Ovary (tissue), 10 donors: ENCODE measurements at regions of chr9 and their contacts with region 1.

Region 1: DNA sequence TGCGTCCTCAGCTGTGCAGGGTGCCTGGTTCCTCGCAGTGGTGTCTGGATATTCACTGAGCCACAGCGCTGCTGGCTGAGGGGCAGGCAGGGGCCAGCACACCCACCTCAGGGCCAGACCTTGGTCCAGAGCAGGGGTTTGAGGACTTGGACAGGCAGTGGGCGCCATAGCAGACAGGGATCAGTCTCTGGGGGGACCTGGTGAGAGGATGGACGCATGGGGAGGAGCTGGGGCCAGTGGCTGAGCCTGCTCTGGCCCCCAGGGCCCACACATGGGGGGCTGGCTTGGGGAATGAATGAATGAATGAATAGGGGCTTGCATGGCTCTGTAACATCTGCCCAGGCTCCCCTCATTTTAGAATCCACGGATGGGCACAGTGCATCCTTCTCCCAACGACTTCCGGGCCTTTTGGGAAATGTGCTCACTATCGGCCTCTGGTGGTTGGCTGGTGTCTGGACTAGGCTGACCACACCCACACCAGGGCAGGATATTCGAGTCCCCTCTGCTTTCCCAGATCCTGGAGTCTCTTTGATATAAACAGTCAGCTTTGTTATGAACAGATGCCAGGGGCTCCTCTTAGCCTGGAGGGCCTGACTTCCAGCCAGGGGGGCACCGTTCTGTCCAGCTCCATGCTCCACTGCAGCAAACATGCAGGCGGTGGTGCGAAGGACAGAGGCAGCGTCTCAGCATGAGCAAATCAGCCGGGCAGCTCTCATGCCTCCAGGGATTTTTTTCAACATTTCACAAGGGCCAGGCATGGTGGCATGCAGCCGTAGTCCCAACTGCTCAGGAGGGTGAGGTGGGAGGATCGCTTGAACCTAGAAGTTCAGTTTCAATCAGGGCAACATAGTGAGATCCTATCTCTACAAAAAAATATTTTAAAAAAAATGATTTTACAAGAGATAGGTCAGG is 62.6 kb downstream of the NEK6 start:
- DNase-seq: peak; percentile 73 to 82 (median 78)
- H3K4me3 ChIP-seq: no peak overlapping the region
- H3K27ac ChIP-seq: no peak overlapping the region
- H3K4me1 ChIP-seq: peaks cover 3% of the 10 kb centered on the region
- H3K27me3 ChIP-seq: no peaks in the 10 kb centered on the region
- CTCF ChIP-seq: peak; percentile 70 to 78 (median 71)
- EP300 ChIP-seq: no peak
- POLR2A ChIP-seq: no peak

Region 2: DNA sequence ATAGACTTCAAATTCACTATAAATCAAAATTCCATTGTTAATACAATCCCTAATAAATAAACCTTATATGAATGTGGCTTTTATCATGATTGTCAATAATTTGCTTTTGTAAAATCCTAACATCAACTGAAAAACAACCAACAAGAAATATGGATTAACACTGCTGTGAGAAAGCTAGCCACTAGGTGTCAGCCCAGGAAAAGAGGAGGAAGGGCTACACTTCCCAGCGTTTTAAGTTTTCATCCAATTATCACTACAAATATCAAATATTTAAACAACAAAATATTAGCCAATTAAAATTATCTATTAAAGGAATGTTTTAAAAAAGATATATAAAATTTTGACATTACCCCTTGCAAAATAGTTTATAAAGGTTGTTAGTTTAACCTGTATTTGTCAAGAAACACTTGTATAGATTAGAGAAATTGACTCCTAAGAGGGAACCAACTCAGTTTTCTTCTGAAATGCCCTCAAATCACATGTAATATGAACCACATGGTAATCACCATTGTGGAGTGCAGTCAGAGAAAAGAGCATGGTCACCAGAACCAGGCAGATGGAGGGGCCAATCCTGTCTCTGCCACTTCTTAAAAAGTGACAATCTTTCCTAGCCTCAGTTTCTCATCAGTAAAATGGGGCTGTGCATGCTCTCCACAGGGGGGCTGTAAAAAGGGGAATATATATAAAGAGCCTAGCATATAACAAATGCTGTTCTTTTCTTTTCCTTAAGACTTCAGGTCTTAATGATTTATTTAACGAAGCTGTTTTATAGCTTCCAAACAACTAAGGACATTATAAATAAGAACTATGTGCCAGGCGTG is 776.1 kb before region 1 on chr9:
- intact Hi-C with region 1: loop called in 1 of 4 experiments (anchors 10 kb)
- DNase-seq: peak in 1 of 5 donors; percentile 31
- H3K4me3 ChIP-seq: no peak overlapping the region
- H3K27ac ChIP-seq: no peak overlapping the region
- H3K4me1 ChIP-seq: no peaks in the 10 kb centered on the region
- H3K27me3 ChIP-seq: no peaks in the 10 kb centered on the region
- CTCF ChIP-seq: peak; percentile 13 to 81 (median 64)
- EP300 ChIP-seq: no peak
- POLR2A ChIP-seq: no peak

Region 3: GRCh38 chr9:124126571-124127289 is 193.6 kb before region 1 on chr9:
- intact Hi-C with region 1: loop called in 3 of 4 experiments (anchors 2 to 10 kb)
- DNase-seq: peak; percentile 42 to 76 (median 70)
- H3K4me3 ChIP-seq: no peak overlapping the region
- H3K27ac ChIP-seq: no peak overlapping the region
- H3K4me1 ChIP-seq: no peaks in the 10 kb centered on the region
- H3K27me3 ChIP-seq: no peaks in the 10 kb centered on the region
- CTCF ChIP-seq: peak; percentile 68 to 78 (median 70)
- EP300 ChIP-seq: no peak
- POLR2A ChIP-seq: no peak

Region 4: GRCh38 chr9:124133727-124134126 is 186.6 kb before region 1 on chr9:
- intact Hi-C with region 1: loop called in 2 of 4 experiments (anchors 5 to 10 kb)
- DNase-seq: no peak
- H3K4me3 ChIP-seq: no peak overlapping the region
- H3K27ac ChIP-seq: no peak overlapping the region
- H3K4me1 ChIP-seq: no peaks in the 10 kb centered on the region
- H3K27me3 ChIP-seq: no peaks in the 10 kb centered on the region
- CTCF ChIP-seq: no peak
- EP300 ChIP-seq: no peak
- POLR2A ChIP-seq: no peak